Caco-2 (cell line): ENCODE measurements at regions of chr7 and their contacts with region 1.

Region 1: GRCh38 chr7:79298145-79298760 is 155.2 kb downstream of the MAGI2 start:
- DNase-seq: peak in 1 of 2 experiments; percentile 42
- H3K4me3 ChIP-seq: no peak overlapping the region
- H3K4me3 Mint-ChIP-seq: no peak overlapping the region
- H3K27ac Mint-ChIP-seq: no peak overlapping the region
- H3K4me1 ChIP-seq: peaks cover 22% of the 10 kb centered on the region
- H3K4me1 Mint-ChIP-seq: peaks cover 7% of the 10 kb centered on the region
- H3K27me3 ChIP-seq: no peaks in the 10 kb centered on the region
- H3K27me3 Mint-ChIP-seq: no peaks in the 10 kb centered on the region
- CTCF ChIP-seq: peak; percentile 65 to 81

Region 2: GRCh38 chr7:79272066-79272669 is 26.1 kb before region 1 on chr7:
- CTCF ChIA-PET with region 1: no interaction called
- POLR2A ChIA-PET with region 1: no interaction called
- intact Hi-C with region 1: no loop called
- DNase-seq: peak in 1 of 2 experiments; percentile 29
- H3K4me3 ChIP-seq: no peak overlapping the region
- H3K4me3 Mint-ChIP-seq: no peak overlapping the region
- H3K27ac Mint-ChIP-seq: no peak overlapping the region
- H3K4me1 ChIP-seq: peaks cover 5% of the 10 kb centered on the region; the same call in 1 of the 2 replicates
- H3K4me1 Mint-ChIP-seq: peaks cover 7% of the 10 kb centered on the region
- H3K27me3 ChIP-seq: no peaks in the 10 kb centered on the region
- H3K27me3 Mint-ChIP-seq: no peaks in the 10 kb centered on the region
- CTCF ChIP-seq: peak; percentile 66 to 72

Region 3: DNA sequence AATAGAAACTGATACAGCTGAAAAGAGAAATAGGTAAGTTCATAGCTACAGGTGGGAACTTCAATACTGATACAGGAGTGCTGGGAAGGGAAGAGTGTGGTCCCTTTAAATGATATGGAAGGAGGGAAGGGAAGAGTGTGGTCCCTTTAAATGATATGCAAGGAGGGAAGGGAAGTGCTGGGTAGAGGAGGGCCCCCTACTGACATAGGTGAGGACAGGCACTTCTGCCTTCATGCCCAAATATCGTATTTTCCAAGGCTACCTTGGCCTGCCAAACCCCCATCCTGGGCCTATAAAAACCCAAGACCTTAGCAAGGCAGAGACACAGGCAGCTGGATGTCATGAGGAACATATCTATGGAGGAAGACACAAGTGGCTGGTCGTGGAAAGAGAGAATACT is 63.0 kb after region 1 on chr7:
- CTCF ChIA-PET with region 1: interaction called, 4 read pairs
- POLR2A ChIA-PET with region 1: no interaction called
- intact Hi-C with region 1: loop called (anchors 2 kb)
- DNase-seq: peak; percentile 22 to 37
- H3K4me3 ChIP-seq: no peak overlapping the region
- H3K4me3 Mint-ChIP-seq: no peak overlapping the region
- H3K27ac Mint-ChIP-seq: no peak overlapping the region
- H3K4me1 ChIP-seq: no peaks in the 10 kb centered on the region
- H3K4me1 Mint-ChIP-seq: no peaks in the 10 kb centered on the region
- H3K27me3 ChIP-seq: no peaks in the 10 kb centered on the region
- H3K27me3 Mint-ChIP-seq: no peaks in the 10 kb centered on the region
- CTCF ChIP-seq: peak; percentile 17 to 28

Region 4: DNA sequence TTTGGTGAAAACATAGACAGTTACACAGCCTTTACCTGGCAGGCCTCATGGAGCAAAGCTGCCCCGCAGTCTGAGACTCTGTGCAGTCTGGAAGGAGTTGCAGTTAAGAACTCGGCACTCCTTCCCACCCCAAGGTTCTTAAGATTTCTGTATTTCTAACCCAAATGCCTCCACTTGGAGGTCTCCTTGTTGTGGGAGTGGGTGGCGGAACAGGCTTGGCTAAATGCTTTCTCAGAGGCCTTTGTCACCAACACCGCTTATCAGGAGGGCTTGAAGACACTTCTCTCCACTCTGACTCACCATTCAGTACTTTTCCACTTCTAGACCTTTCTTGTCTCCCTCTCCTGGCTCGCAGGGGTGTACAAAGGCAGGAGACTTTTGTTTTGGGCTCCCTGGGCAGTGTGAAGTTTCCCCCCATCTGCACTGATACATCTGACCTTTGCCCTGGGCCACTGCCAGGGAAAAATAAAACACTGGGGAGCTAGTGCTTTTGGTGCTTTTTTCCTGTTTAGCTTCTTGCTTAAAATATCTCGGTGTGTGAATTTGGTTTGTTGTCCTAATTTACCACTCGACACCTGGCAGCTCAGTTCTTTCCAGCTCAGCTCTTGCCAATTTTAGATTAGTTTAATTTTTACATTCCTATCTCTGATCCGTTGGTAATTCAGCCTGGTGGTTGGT is 206.6 kb after region 1 on chr7:
- CTCF ChIA-PET with region 1: interaction called, 3 read pairs
- POLR2A ChIA-PET with region 1: no interaction called
- intact Hi-C with region 1: loop called (anchors 2 kb)
- DNase-seq: peak; percentile 67 to 74
- H3K4me3 ChIP-seq: no peak overlapping the region
- H3K4me3 Mint-ChIP-seq: peak overlapping the region; percentile 42
- H3K27ac Mint-ChIP-seq: peak overlapping the region; percentile 90
- H3K4me1 ChIP-seq: peaks cover 56% of the 10 kb centered on the region
- H3K4me1 Mint-ChIP-seq: peaks cover 39% of the 10 kb centered on the region
- H3K27me3 ChIP-seq: no peaks in the 10 kb centered on the region
- H3K27me3 Mint-ChIP-seq: no peaks in the 10 kb centered on the region
- CTCF ChIP-seq: no peak

Region 5: GRCh38 chr7:79741684-79742083 is 443.4 kb after region 1 on chr7:
- CTCF ChIA-PET with region 1: interaction called, 22 read pairs
- POLR2A ChIA-PET with region 1: no interaction called
- intact Hi-C with region 1: loop called (anchors 1 kb)
- DNase-seq: no peak
- H3K4me3 ChIP-seq: no peak overlapping the region
- H3K4me3 Mint-ChIP-seq: no peak overlapping the region
- H3K27ac Mint-ChIP-seq: no peak overlapping the region
- H3K4me1 ChIP-seq: no peaks in the 10 kb centered on the region
- H3K4me1 Mint-ChIP-seq: no peaks in the 10 kb centered on the region
- H3K27me3 ChIP-seq: no peaks in the 10 kb centered on the region
- H3K27me3 Mint-ChIP-seq: no peaks in the 10 kb centered on the region
- CTCF ChIP-seq: peak; percentile 46 to 61

Region 6: GRCh38 chr7:80018941-80019752 is 720.9 kb after region 1 on chr7:
- CTCF ChIA-PET with region 1: no interaction called
- POLR2A ChIA-PET with region 1: no interaction called
- intact Hi-C with region 1: loop called (anchors 2 kb)
- DNase-seq: peak; percentile 37 to 41
- H3K4me3 ChIP-seq: no peak overlapping the region
- H3K4me3 Mint-ChIP-seq: no peak overlapping the region
- H3K27ac Mint-ChIP-seq: no peak overlapping the region
- H3K4me1 ChIP-seq: no peaks in the 10 kb centered on the region; the same call in 1 of the 2 replicates
- H3K4me1 Mint-ChIP-seq: no peaks in the 10 kb centered on the region
- H3K27me3 ChIP-seq: no peaks in the 10 kb centered on the region
- H3K27me3 Mint-ChIP-seq: no peaks in the 10 kb centered on the region
- CTCF ChIP-seq: peak; percentile 78 to 95